GM12878 (cell line): ENCODE measurements at regions of chr7 and their contacts with region 1.

Region 1: DNA sequence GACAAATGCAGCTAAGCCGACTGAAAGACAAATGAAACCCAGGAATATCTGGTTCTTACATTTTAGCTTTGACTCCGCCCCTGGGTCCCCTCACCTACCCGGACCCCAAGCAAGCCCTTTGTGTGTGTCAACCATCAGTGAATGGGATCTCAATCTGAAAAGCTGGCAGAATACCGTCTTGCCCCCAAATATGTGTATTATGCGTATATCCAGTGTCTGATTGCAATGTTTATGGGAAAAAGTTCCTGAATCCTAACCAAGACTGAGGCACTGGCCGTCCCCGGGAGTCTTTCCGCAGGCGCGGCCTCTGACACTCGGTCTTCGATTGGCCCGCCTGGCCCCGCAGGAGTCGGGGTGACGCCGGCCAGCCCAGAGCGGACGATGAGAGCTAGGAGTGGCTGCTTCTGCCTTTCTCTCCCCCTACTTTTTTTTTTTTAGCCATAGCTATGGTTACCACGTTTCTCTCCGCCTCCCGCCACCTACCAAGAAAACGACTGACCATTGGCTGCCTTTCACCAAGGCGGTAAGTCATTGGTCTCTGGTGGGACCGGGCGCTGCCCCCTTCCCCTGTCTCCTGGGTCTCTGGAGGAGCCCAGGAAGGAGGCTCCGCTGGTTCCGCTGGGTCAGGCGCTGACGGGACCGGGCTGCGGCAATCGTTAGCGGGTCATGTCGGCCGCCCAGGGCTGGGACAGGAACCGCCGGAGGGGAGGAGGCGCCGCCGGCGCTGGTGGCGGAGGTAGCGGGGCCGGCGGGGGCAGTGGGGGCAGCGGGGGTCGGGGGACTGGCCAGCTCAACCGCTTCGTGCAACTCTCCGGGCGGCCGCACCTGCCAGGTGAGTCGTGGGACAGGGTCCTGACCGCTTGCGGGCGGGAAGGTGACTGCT is at the start of gene KLHDC10:
- DNase-seq: peak; percentile 97
- ATAC-seq: peak; percentile 97
- H3K4me3 ChIP-seq: peak within 1 kb of the TSS; percentile 99
- H3K27ac ChIP-seq: peak within 1 kb of the TSS; percentile 45; the same call in 1 of the 2 replicates
- H3K4me1 ChIP-seq: no peaks in the 10 kb centered on the region
- H3K27me3 ChIP-seq: no peaks in the 10 kb centered on the region
- CTCF ChIP-seq: no peak
- EP300 ChIP-seq: peak in 1 of 2 experiments; percentile 28; a peak in 1 of 4 replicates
- POLR2A ChIP-seq: peak; percentile 74
- RAD21 ChIP-seq: no peak
- polyA plus RNA-seq, gene KLHDC10: 2.9 to 3.2 TPM

Region 2: DNA sequence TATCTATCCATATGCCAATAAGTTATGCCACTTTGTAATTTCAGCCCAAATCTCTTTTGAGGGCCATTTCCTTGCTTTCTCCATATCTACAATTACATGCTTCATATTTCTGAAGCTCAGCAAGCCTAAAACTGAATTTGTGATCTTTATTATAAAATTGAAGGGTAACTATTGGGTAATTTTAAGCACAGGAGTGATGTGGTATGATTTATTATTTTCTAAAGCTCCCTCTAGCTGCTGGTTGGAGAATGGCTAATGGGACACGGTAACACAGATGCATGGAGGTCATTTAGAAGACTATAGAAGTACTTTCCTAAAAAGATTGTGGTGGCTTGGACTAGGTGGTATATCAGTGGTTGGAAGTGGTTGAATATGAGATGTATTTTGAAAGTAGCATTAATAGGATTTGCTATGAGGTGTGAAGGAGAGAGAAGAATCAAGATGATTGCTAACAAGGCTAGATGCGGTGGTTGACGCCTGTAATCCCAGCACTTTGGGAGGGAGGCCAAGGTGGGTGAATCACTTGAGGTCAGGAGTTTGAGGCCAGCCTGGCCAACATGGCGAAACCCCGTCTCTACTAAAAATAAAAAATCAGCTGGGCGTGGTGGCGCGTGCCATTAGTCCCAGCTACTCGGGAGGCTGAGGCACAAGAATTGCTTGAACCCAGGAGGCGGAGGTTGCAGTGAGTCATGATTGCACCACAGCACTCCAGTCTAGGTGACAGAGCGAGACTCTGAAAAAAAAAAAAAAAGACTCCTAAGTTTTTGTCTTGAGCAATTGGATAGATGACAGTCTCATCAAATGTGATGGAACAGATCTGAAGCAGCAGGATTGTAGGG is 14.0 kb after region 1 on chr7:
- CTCF ChIA-PET with region 1: interaction called, 50 read pairs
- POLR2A ChIA-PET with region 1: interaction called, 4 read pairs
- RAD21 ChIA-PET with region 1: interaction called, 10 read pairs
- SMC1A ChIA-PET with region 1: interaction called, 41 read pairs
- in situ Hi-C with region 1: no loop called
- intact Hi-C with region 1: no loop called
- DNase-seq: no peak
- ATAC-seq: peak; percentile 79
- H3K4me3 ChIP-seq: no peak overlapping the region
- H3K27ac ChIP-seq: no peak overlapping the region
- H3K4me1 ChIP-seq: no peaks in the 10 kb centered on the region; the same call in 1 of the 2 replicates
- H3K27me3 ChIP-seq: no peaks in the 10 kb centered on the region
- CTCF ChIP-seq: peak; percentile 36 to 51 (median 37); a peak in 5 of 6 replicates
- EP300 ChIP-seq: no peak
- POLR2A ChIP-seq: no peak
- RAD21 ChIP-seq: no peak

Region 3: GRCh38 chr7:130160455-130160854 is 90.2 kb after region 1 on chr7:
- CTCF ChIA-PET with region 1: interaction called, 3 read pairs
- POLR2A ChIA-PET with region 1: no interaction called
- RAD21 ChIA-PET with region 1: interaction called, 6 read pairs
- SMC1A ChIA-PET with region 1: interaction called, 5 read pairs
- in situ Hi-C with region 1: no loop called
- intact Hi-C with region 1: loop called (anchors 5 kb)
- DNase-seq: no peak
- ATAC-seq: no peak
- H3K4me3 ChIP-seq: no peak overlapping the region
- H3K27ac ChIP-seq: no peak overlapping the region
- H3K4me1 ChIP-seq: no peaks in the 10 kb centered on the region
- H3K27me3 ChIP-seq: no peaks in the 10 kb centered on the region
- CTCF ChIP-seq: no peak
- EP300 ChIP-seq: no peak
- POLR2A ChIP-seq: no peak; the same call in 1 of the 2 replicates
- RAD21 ChIP-seq: no peak

Region 4: DNA sequence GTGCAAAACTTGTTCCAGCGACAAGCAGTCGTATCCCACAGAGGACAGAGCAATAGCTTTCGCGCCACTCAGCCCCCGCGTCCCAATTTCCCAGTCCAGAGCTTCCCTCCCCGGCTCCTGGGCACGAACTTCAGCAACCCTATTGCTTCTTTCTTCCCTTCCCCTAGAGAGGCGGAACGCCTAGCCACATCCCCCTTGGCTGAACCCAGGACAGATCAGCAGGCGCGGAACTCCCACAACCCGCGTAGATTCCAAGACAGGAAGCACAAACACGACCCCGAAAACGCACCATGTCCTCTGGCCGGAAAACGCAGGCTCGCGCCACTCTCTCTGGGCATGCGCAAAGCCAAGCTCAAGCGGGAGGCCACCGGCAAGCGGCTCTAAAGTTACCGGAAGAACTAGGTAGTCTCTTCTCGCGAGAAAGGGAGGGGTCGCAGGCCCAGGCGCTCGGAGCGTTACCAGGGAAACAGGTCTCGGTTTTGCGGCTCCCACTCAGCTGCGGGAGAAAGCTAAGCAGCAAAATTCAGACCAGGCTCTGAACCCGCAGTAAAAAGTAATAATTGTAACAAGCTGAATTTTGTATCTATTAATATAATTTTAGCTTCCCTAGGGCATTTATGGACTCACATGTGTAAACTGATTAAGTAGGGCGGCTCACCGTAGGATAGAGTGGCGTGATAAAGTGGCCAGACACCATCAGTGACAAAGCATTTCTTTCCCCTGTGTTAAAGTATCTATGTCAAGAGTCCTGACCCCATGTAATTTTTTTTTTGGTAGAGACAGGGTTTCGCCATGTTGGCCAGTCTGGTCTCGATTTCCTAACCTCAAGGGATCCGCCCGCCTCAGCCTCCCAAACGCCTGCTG is 135.1 kb after region 1 on chr7 and contains the start of gene TMEM209:
- CTCF ChIA-PET with region 1: interaction called, 11 read pairs
- POLR2A ChIA-PET with region 1: interaction called, 8 read pairs
- RAD21 ChIA-PET with region 1: interaction called, 11 read pairs
- SMC1A ChIA-PET with region 1: interaction called, 11 read pairs
- in situ Hi-C with region 1: no loop called
- intact Hi-C with region 1: no loop called
- DNase-seq: peak; percentile 84
- ATAC-seq: peak; percentile 97
- H3K4me3 ChIP-seq: peak within 1 kb of the TSS; percentile 90
- H3K27ac ChIP-seq: peak within 1 kb of the TSS; percentile 96
- H3K4me1 ChIP-seq: no peaks in the 10 kb centered on the region
- H3K27me3 ChIP-seq: no peaks in the 10 kb centered on the region
- CTCF ChIP-seq: no peak
- EP300 ChIP-seq: 0 out of 4 replicates have a peak, but pooled peaks of 1 of the 2 experiments have one; percentile 23
- POLR2A ChIP-seq: peak; percentile 99
- RAD21 ChIP-seq: no peak
- polyA plus RNA-seq, gene TMEM209: 22.2 to 38.2 TPM

Region 5: DNA sequence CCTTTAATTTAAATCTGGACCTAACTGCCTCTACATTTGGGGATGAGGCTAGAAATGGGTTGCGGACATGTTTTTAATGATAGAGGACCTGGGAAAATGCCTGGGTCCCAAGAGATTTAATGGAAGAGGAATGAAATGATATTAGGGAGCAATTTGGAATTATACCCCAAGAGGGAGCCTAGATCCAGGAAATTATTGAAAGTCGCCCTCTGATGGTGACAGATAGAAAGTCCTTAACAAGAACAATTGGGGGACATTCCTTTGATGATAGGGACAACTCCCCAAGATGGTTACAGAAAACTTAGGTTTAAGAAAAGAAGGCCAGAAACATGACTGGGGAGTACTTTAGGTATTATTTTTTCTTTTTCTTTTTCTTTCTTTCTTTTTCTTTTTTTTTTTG is 625.6 kb after region 1 on chr7:
- CTCF ChIA-PET with region 1: interaction called, 4 read pairs
- POLR2A ChIA-PET with region 1: no interaction called
- RAD21 ChIA-PET with region 1: no interaction called
- SMC1A ChIA-PET with region 1: interaction called, 3 read pairs
- in situ Hi-C with region 1: no loop called
- intact Hi-C with region 1: loop called (anchors 2 kb)
- DNase-seq: no peak
- ATAC-seq: peak; percentile 47; the same call in 1 of the 3 replicates
- H3K4me3 ChIP-seq: no peak overlapping the region
- H3K27ac ChIP-seq: no peak overlapping the region
- H3K4me1 ChIP-seq: no peaks in the 10 kb centered on the region
- H3K27me3 ChIP-seq: no peaks in the 10 kb centered on the region
- CTCF ChIP-seq: peak; percentile 44 to 60 (median 45)
- EP300 ChIP-seq: no peak
- POLR2A ChIP-seq: no peak
- RAD21 ChIP-seq: peak; percentile 63; the same call in 1 of the 2 replicates

Region 6: GRCh38 chr7:130825819-130826218 is 755.6 kb after region 1 on chr7:
- CTCF ChIA-PET with region 1: interaction called, 3 read pairs
- POLR2A ChIA-PET with region 1: no interaction called
- RAD21 ChIA-PET with region 1: interaction called, 5 read pairs
- SMC1A ChIA-PET with region 1: no interaction called
- in situ Hi-C with region 1: loop called (anchors 5 kb)
- intact Hi-C with region 1: no loop called
- DNase-seq: no peak
- ATAC-seq: no peak
- H3K4me3 ChIP-seq: no peak overlapping the region
- H3K27ac ChIP-seq: no peak overlapping the region
- H3K4me1 ChIP-seq: no peaks in the 10 kb centered on the region
- H3K27me3 ChIP-seq: no peaks in the 10 kb centered on the region
- CTCF ChIP-seq: no peak
- EP300 ChIP-seq: no peak
- POLR2A ChIP-seq: no peak
- RAD21 ChIP-seq: no peak